ENCODE measurements at regions of chr2 and their contacts with region 1.

Region 1: GRCh38 chr2:189412330-189412953 is 28.8 kb upstream of the WDR75 start:
- DNase-seq: peak in 1 of 2 donors; percentile 76
- ATAC-seq: peak in 2 of 3 donors; percentile 42 to 62
- H3K4me3 ChIP-seq: no peak overlapping the region
- H3K4me3 Mint-ChIP-seq: no peak overlapping the region
- H3K27ac ChIP-seq: no peak overlapping the region
- H3K27ac Mint-ChIP-seq: no peak overlapping the region
- H3K4me1 ChIP-seq: no peaks in the 10 kb centered on the region
- H3K4me1 Mint-ChIP-seq: no peaks in the 10 kb centered on the region
- H3K27me3 ChIP-seq: no peaks in the 10 kb centered on the region
- H3K27me3 Mint-ChIP-seq: no peaks in the 10 kb centered on the region
- CTCF ChIP-seq: peak; percentile 71

Region 2: DNA sequence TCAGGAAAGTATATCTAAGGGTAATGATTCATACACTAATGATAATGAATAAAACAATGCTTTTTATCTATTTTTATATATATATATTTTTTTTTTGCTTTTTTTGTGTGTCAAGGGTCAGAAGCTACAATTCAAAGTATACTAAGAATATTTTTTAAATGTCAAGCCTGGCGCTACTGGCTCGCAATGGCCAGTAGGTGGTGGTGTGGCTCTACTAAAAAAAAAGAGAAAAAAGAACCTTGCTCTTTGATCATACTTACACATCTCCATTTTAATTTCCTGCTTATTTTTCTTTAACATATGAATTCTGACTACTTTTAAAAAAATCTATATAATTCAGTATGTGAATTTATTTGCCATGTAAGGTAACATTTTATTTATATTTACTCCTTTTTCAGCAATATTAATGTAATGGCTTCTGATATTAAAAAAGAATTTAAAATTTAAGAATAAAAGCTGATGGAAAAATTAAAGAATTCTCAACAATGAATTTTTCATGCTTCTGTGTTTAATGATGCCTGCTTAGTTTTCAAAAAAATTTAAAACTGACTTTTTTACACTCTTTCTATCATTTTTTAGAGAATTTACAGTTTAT is 887.8 kb before region 1 on chr2:
- intact Hi-C with region 1: loop called (anchors 10 kb)
- DNase-seq: peak in 1 of 2 donors; percentile 42
- ATAC-seq: no peak
- H3K4me3 ChIP-seq: no peak overlapping the region
- H3K4me3 Mint-ChIP-seq: no peak overlapping the region
- H3K27ac ChIP-seq: no peak overlapping the region
- H3K27ac Mint-ChIP-seq: no peak overlapping the region
- H3K4me1 ChIP-seq: no peaks in the 10 kb centered on the region
- H3K4me1 Mint-ChIP-seq: no peaks in the 10 kb centered on the region
- H3K27me3 ChIP-seq: no peaks in the 10 kb centered on the region
- H3K27me3 Mint-ChIP-seq: no peaks in the 10 kb centered on the region
- CTCF ChIP-seq: no peak

Region 3: DNA sequence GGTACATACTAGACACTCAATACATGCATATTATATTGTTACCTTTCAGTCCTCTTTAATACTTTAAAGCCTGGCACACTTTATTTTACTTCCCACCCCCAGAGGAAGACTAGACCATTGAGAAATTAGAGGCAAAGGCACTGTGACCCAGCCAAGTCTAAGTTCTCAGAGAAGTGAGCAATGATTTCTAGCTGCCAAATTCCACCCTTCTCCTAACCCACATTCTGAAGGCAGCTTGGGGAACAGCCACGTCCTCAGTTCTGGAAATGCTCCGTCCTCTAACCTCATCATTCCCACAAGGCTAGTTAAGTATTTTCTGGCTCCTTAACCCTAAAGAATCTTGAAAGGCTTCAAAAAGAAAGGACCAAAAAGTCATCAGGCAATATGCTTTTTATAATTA is 319.5 kb before region 1 on chr2:
- intact Hi-C with region 1: loop called (anchors 5 kb)
- DNase-seq: no peak
- ATAC-seq: no peak
- H3K4me3 ChIP-seq: no peak overlapping the region
- H3K4me3 Mint-ChIP-seq: no peak overlapping the region
- H3K27ac ChIP-seq: no peak overlapping the region
- H3K27ac Mint-ChIP-seq: no peak overlapping the region
- H3K4me1 ChIP-seq: no peaks in the 10 kb centered on the region
- H3K4me1 Mint-ChIP-seq: no peaks in the 10 kb centered on the region
- H3K27me3 ChIP-seq: no peaks in the 10 kb centered on the region
- H3K27me3 Mint-ChIP-seq: no peaks in the 10 kb centered on the region
- CTCF ChIP-seq: no peak

Region 4: GRCh38 chr2:189142893-189143759 is 269.3 kb before region 1 on chr2:
- intact Hi-C with region 1: loop called (anchors 2 kb)
- DNase-seq: peak in 1 of 2 donors; percentile 76
- ATAC-seq: peak in 2 of 3 donors; percentile 36 to 43
- H3K4me3 ChIP-seq: no peak overlapping the region
- H3K4me3 Mint-ChIP-seq: no peak overlapping the region
- H3K27ac ChIP-seq: no peak overlapping the region
- H3K27ac Mint-ChIP-seq: no peak overlapping the region
- H3K4me1 ChIP-seq: no peaks in the 10 kb centered on the region
- H3K4me1 Mint-ChIP-seq: no peaks in the 10 kb centered on the region
- H3K27me3 ChIP-seq: no peaks in the 10 kb centered on the region
- H3K27me3 Mint-ChIP-seq: no peaks in the 10 kb centered on the region
- CTCF ChIP-seq: no peak

Region 5: GRCh38 chr2:189327879-189328847 is 84.3 kb before region 1 on chr2:
- intact Hi-C with region 1: no loop called
- DNase-seq: no peak
- ATAC-seq: no peak
- H3K4me3 ChIP-seq: no peak overlapping the region
- H3K4me3 Mint-ChIP-seq: no peak overlapping the region
- H3K27ac ChIP-seq: no peak overlapping the region
- H3K27ac Mint-ChIP-seq: no peak overlapping the region
- H3K4me1 ChIP-seq: no peaks in the 10 kb centered on the region
- H3K4me1 Mint-ChIP-seq: no peaks in the 10 kb centered on the region
- H3K27me3 ChIP-seq: no peaks in the 10 kb centered on the region
- H3K27me3 Mint-ChIP-seq: no peaks in the 10 kb centered on the region
- CTCF ChIP-seq: no peak

Region 6: DNA sequence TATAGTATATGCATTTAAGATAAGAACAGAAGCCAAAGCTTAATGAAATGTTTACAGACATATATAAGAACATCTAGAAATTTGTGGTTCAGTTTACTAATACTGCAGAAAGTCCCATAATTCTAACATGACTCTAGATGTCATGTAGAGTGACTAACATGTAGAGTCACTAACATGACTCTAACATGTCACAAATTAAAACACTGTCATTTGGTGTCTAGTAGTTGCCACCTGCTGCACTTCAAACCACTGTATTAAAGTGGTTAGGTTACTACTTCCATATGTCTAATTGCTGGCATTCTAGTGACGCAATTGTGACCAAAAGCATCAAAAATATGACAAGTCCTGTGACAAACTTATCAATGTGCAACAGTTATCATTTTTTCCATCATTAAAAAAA is 71.4 kb before region 1 on chr2:
- intact Hi-C with region 1: no loop called
- DNase-seq: no peak
- ATAC-seq: no peak
- H3K4me3 ChIP-seq: no peak overlapping the region
- H3K4me3 Mint-ChIP-seq: no peak overlapping the region
- H3K27ac ChIP-seq: no peak overlapping the region
- H3K27ac Mint-ChIP-seq: no peak overlapping the region
- H3K4me1 ChIP-seq: no peaks in the 10 kb centered on the region
- H3K4me1 Mint-ChIP-seq: no peaks in the 10 kb centered on the region
- H3K27me3 ChIP-seq: no peaks in the 10 kb centered on the region
- H3K27me3 Mint-ChIP-seq: no peaks in the 10 kb centered on the region
- CTCF ChIP-seq: no peak